Tibial artery (tissue), 4 donors: ENCODE measurements at regions of chr19 and their contacts with region 1.

Region 1: DNA sequence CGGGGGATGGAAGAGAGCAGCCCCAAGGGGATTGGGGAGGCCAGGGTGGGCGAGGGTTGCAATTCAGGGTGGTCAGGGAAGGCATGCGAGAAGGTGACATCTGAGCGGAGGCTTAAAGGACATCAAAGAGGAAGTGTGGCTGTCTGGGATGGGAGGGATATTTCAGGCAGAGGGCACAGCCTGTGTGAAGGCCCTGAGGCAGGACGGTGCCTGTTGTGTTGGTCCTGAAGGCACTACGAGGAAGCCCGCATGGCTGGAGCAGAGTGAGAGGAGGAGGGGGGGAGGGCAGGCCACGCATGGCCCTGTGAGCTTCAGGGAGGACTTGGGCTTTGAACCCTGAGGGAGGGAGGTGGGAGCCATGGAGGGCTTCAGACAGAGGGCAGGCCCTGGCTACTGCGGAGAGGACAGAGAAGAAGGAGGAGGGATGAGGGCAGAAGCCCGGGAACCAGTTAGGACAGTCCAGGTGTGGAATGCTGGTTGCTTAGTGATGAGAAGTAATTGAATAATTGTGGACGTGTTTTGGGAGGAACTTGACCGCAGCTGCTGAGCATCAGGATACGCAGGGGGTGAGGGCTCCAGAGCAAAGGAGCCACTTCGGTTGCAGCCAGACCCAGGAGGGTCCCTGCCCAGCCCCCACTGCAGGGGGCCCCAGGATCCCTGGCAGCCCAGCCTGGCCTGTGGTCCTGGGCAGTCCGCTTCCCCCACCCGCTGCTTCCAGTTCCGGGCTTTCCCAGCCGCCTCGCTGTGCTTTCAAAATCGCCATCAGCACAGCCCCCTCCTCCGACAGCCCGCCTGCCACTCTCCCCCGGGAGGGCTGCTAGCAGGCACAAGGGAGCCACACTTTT is 6.2 kb downstream of the TLE6 start:
- DNase-seq: peak; percentile 85 to 95
- H3K4me3 ChIP-seq: peak overlapping the region; percentile 38 to 42
- H3K27ac ChIP-seq: peak overlapping the region; percentile 86 to 93
- H3K4me1 ChIP-seq: peaks cover 9 to 30% (median 25%) of the 10 kb centered on the region in 4 donors
- H3K27me3 ChIP-seq: no peaks in the 10 kb centered on the region
- CTCF ChIP-seq: no peak

Region 2: DNA sequence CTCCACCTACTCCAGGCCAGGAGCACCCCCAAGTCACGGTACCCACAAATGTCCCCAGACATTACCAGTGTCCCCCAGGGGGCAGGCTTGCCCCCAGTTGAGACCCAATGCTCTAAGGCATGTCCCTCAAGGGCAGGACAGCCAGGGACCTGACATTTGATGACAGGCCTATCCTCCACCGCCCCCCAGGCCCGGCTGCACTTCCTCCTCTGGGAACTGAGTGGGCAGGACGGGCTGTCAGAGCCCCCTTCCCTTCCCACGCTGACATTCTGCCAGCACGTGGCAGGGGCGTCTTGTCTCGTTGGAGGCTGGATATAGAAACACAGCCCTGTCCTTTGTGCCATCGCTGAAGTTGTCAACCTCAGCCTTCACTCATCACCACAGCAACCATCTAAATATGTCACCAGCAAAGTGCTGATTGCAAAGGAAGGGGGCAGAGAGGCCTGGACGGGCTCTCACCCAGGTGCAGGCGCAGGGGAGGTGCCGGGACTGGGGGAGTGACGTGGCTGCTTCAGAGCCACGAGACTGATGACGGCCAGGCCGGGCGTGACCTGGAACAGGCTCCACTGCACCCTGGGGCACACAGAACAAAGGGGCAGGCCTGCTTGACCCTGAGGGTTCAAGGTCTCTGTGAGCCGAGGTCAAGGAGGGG is 319.5 kb before region 1 on chr19:
- intact Hi-C with region 1: no loop called
- DNase-seq: no peak
- H3K4me3 ChIP-seq: no peak overlapping the region
- H3K27ac ChIP-seq: no peak overlapping the region
- H3K4me1 ChIP-seq: no peaks in the 10 kb centered on the region
- H3K27me3 ChIP-seq: peaks cover 0 to 8% of the 10 kb centered on the region in 2 donors
- CTCF ChIP-seq: no peak

Region 3: GRCh38 chr19:3035542-3036118 is 52.1 kb after region 1 on chr19:
- intact Hi-C with region 1: loop called (anchors 2 kb)
- DNase-seq: peak; percentile 98 to 99
- H3K4me3 ChIP-seq: peak overlapping the region; percentile 51 to 56
- H3K27ac ChIP-seq: peak overlapping the region; percentile 80 to 88
- H3K4me1 ChIP-seq: peaks cover 4 to 25% (median 20%) of the 10 kb centered on the region in 4 donors
- H3K27me3 ChIP-seq: peaks cover 0 to 38% of the 10 kb centered on the region in 2 donors
- CTCF ChIP-seq: peak in 1 of 2 experiments; percentile 34